Posterior cingulate gyrus (tissue), 11 donors: ENCODE measurements at regions of chr19 and their contacts with region 1.

Region 1: GRCh38 chr19:15154002-15154612 is 46.7 kb downstream of the NOTCH3 start:
- DNase-seq: no peak

Region 2: GRCh38 chr19:14871619-14872230 is 282.4 kb before region 1 on chr19:
- intact Hi-C with region 1: loop called (anchors 5 kb)
- DNase-seq: no peak

Region 3: DNA sequence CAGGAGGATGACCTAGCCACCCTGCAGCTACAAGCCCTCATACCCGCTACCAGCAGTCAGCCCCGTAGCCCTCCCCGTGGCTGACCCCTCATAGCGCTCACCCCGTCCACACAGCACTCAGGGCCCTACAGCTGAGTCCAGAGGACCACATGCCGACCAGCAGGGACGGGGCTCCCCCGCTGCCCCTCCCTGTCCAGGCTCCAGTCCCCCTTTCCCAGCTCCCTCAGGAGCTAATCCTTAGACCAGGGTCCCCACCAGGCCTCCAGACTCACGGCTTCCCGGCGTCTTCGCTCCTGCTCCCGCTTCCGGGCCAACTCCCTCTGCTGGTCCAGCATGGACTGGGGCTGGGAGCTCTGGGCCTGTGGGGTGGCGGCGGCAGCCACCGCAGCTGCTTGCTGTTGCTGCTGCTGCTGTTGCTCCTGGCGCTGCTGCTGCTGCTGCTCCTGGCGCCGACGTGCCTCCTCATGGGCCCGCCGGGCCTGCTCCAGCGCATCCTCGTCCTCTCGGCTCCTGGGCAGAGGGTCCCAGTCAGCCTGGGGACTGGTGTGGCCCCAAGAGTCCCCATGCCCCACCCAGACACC is 84.5 kb after region 1 on chr19:
- intact Hi-C with region 1: no loop called
- DNase-seq: no peak